Naive thymus-derived CD4-positive, alpha-beta T cell (primary cell): ENCODE measurements at regions of chr20 and their contacts with region 1.

Region 1: GRCh38 chr20:11544029-11544678 is 373.5 kb upstream of the BTBD3 start:
- DNase-seq: no peak
- ATAC-seq: no peak
- H3K4me3 ChIP-seq: no peak overlapping the region
- H3K4me3 Mint-ChIP-seq: no peak overlapping the region
- H3K27ac ChIP-seq: no peak overlapping the region
- H3K27ac Mint-ChIP-seq: no peak overlapping the region
- H3K4me1 ChIP-seq: no peaks in the 10 kb centered on the region
- H3K4me1 Mint-ChIP-seq: peaks cover 0 to 2% (median 0%) of the 10 kb centered on the region in 7 donors
- H3K27me3 ChIP-seq: no peaks in the 10 kb centered on the region
- H3K27me3 Mint-ChIP-seq: no peaks in the 10 kb centered on the region

Region 2: DNA sequence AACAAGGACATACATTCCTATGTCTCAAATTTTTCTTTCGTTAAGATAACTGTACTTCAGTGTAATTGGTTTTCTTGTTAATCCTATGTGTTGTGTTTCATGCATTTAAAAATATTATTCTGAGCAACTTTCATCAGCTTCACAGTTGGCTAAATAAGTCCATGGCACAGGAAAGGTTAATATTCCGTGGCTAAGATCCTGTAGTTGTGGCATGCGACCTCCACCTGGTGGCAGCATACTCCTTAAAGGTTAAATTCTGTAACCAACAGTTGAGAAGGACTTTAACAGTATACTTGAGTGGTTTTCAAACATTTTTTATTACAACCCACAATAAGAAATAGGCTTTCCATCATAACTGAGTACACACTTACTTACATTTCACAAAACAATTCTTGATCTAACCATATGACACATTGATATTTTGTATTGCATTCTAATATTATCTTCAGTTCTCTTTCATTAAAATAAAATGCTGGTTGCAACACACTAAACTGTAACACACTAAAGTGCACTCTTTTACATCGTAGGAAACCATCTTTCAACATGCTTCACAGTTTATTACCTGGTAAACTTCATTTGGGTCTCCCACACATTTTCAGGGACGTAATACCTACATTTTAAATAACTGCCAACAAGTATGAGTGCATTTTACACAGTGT is 990.7 kb before region 1 on chr20:
- CTCF ChIA-PET with region 1: no interaction called
- POLR2A ChIA-PET with region 1: no interaction called
- intact Hi-C with region 1: loop called in 1 of 2 experiments (anchors 2 kb)
- DNase-seq: peak in 3 of 9 donors; percentile 11 to 37 (median 20)
- ATAC-seq: peak; percentile 49
- H3K4me3 ChIP-seq: no peak overlapping the region
- H3K4me3 Mint-ChIP-seq: no peak overlapping the region
- H3K27ac ChIP-seq: no peak overlapping the region
- H3K27ac Mint-ChIP-seq: no peak overlapping the region
- H3K4me1 ChIP-seq: peaks cover 0 to 5% of the 10 kb centered on the region in 2 donors
- H3K4me1 Mint-ChIP-seq: peaks cover 24 to 42% (median 37%) of the 10 kb centered on the region in 7 donors
- H3K27me3 ChIP-seq: no peaks in the 10 kb centered on the region
- H3K27me3 Mint-ChIP-seq: peaks cover 0 to 2% (median 0%) of the 10 kb centered on the region in 5 donors